Activated CD8-positive, alpha-beta memory T cell treated with anti-CD3 and anti-CD28 coated beads, Interleukin-2, amount 10 ng/mL, durations not matched to agents 7 days and 5 days (primary cell): ENCODE measurements at regions of chr3 and their contacts with region 1.

Region 1: DNA sequence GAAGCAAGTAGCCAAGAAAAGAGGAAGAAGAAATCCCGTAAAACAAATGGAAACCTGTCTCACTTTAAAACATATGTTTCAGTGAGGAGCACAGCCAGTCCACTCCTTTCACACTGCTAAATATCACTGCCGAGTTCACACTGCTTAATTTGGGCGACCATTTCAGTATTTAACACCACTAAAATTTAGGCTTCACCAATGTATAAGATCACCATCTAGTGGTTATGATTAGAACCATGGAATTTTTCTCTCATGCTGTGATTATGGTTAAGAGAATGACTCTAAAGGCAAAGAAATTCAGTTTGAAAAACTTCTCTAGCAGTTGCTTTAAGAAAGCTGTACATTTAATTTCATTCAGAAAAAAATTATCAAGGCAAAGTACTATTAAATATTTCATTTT is 16.6 kb downstream of the SLC4A7 start:
- DNase-seq: no peak
- ATAC-seq: peak; percentile 90
- H3K4me3 Mint-ChIP-seq: no peak overlapping the region
- H3K27ac Mint-ChIP-seq: peak overlapping the region; percentile 21
- H3K4me1 Mint-ChIP-seq: peaks cover 8% of the 10 kb centered on the region
- H3K27me3 Mint-ChIP-seq: no peaks in the 10 kb centered on the region

Region 2: GRCh38 chr3:27312044-27312668 is 155.4 kb before region 1 on chr3:
- CTCF ChIA-PET with region 1: interaction called, 18 read pairs
- DNase-seq: no peak
- ATAC-seq: peak; percentile 64
- H3K4me3 Mint-ChIP-seq: no peak overlapping the region
- H3K27ac Mint-ChIP-seq: no peak overlapping the region
- H3K4me1 Mint-ChIP-seq: peaks cover 4% of the 10 kb centered on the region
- H3K27me3 Mint-ChIP-seq: peaks cover 5% of the 10 kb centered on the region

Region 3: DNA sequence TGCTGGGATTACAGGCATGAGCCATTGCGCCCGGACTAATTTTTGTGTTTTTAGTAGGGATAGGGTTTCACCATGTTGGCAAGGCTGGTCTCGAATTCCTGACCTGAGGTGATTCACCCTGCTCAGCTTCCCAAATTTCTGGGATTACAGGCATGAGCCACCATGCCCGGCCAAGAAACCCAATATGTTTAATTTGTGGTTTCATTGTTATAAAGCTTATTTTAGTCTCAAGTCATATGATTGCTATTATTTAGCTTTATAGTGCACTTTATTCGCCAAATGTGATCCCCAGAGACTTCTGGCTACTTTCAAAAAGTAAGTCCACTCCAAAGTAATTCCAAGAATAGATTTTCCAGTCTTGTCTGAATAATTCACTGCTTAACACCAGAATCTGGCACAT is 36.0 kb after region 1 on chr3:
- CTCF ChIA-PET with region 1: no interaction called
- DNase-seq: no peak
- ATAC-seq: no peak
- H3K4me3 Mint-ChIP-seq: no peak overlapping the region
- H3K27ac Mint-ChIP-seq: no peak overlapping the region
- H3K4me1 Mint-ChIP-seq: no peaks in the 10 kb centered on the region
- H3K27me3 Mint-ChIP-seq: no peaks in the 10 kb centered on the region